CD8-positive, alpha-beta memory T cell (primary cell): ENCODE measurements at regions of chr1 and their contacts with region 1.

Region 1: DNA sequence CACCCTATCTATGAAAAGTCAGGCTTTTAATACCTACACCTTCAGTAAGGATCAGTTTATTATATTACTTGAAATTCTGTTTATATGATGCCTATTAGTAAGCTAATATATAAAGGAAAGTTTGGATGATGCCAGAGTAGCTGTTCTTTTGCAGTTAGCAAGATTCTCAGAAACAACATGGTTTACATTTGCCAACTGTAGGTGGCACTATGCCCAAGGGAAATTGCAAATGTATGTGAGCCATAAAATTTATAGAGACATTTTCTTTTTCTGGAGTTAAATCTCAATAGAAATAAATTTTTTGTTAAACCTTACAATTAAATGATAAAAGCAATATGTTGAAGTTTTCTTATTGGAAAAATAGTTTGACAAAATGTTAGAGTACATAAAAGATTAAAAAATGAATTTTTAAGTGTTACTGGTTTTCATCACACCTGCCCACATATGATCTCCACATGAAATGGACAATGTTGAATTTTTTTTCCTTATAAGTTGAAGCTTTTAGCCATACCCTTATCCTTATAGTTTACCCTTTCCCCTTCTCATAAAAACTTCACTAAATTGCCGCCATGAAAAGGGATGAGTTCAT is 32.1 kb upstream of the EPHX4 start:
- DNase-seq: peak in 4 of 5 donors; percentile 21 to 55 (median 42)
- H3K4me3 ChIP-seq: no peak overlapping the region
- H3K4me3 Mint-ChIP-seq: no peak overlapping the region
- H3K27ac ChIP-seq: no peak overlapping the region
- H3K27ac Mint-ChIP-seq: no peak overlapping the region
- H3K4me1 ChIP-seq: no peaks in the 10 kb centered on the region
- H3K4me1 Mint-ChIP-seq: no peaks in the 10 kb centered on the region
- H3K27me3 ChIP-seq: no peaks in the 10 kb centered on the region
- H3K27me3 Mint-ChIP-seq: no peaks in the 10 kb centered on the region

Region 2: DNA sequence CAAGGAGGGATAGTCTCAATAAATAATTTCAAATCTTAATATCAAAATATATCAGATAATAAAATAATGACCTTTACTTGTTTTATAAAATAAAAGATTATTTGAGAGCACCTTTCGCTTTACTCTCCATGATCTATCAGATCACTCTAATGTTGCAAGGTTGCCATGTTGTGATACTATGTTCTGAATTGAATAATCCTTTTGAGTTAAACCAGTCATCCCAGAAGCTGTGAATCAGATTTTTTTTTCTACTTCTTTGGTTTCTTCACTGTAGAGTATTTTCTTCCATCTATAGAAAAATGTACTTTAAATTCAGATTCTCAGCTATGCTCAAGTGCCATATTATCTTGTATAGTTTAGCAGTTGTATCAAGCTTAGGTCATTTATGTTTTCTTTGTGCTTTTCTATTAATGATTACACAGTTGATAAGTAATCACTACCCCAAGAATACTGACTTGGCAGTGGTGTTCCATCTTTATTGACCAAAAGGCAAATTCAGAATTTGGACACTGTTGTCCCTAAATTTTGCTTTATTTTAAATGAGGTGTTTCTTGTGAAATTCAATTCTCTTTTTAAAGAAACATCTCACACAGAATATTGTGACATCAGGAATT is 15.6 kb before region 1 on chr1:
- CTCF ChIA-PET with region 1: interaction called, 10 read pairs
- POLR2A ChIA-PET with region 1: no interaction called
- DNase-seq: no peak
- H3K4me3 ChIP-seq: no peak overlapping the region
- H3K4me3 Mint-ChIP-seq: no peak overlapping the region
- H3K27ac ChIP-seq: no peak overlapping the region
- H3K27ac Mint-ChIP-seq: no peak overlapping the region
- H3K4me1 ChIP-seq: no peaks in the 10 kb centered on the region
- H3K4me1 Mint-ChIP-seq: no peaks in the 10 kb centered on the region
- H3K27me3 ChIP-seq: no peaks in the 10 kb centered on the region
- H3K27me3 Mint-ChIP-seq: peaks cover 0 to 11% of the 10 kb centered on the region in 2 donors

Region 3: DNA sequence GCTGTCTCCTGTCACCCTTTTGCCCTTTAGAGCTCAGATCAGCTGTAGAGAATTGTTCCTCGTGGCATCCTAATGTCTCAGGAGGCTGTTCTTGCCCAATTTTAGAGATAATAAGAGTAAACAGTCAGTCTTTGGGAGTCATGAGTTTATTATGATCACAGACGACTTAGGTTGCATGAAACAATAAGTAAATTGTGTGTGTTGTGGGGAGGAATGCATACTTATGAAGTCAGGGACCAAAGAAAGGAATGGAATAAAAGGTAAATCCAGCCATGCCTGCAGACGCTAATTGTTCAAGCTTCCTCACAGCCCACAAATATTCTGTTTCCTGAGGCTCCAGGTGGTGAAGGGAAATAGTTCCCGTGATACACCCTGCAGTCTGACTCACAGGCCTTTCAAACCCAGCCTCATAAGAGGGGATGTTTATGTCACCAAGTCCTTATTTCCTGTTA is 33.0 kb after region 1 on chr1:
- CTCF ChIA-PET with region 1: no interaction called
- POLR2A ChIA-PET with region 1: no interaction called
- DNase-seq: no peak
- H3K4me3 ChIP-seq: peak overlapping the region; percentile 47
- H3K4me3 Mint-ChIP-seq: peak overlapping the region; percentile 68 to 89 (median 86)
- H3K27ac ChIP-seq: no peak overlapping the region
- H3K27ac Mint-ChIP-seq: peak overlapping the region in 4 of 8 donors; percentile 6 to 88 (median 37)
- H3K4me1 ChIP-seq: peaks cover 11% of the 10 kb centered on the region
- H3K4me1 Mint-ChIP-seq: peaks cover 14 to 16% (median 16%) of the 10 kb centered on the region in 3 donors
- H3K27me3 ChIP-seq: peaks cover 8% of the 10 kb centered on the region
- H3K27me3 Mint-ChIP-seq: peaks cover 5 to 40% of the 10 kb centered on the region in 2 donors

Region 4: DNA sequence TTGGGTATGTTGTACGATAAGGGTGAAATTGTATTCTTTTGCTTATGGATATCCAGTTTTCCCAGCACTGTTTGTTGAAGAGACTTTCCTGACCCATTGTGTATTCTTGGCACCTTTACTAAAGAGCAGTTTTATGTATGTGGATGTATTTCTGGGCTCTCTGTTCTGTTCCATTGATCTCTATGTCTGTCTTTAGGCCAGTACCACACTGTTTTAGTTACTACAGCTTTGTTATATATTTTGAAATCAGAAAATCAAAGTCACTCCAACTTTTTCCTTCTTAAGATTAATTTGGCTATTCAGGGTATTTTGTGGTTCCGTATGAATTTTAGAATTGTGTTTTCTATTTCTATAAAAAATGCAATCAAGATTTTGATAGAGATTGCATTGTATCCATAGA is 157.2 kb after region 1 on chr1:
- CTCF ChIA-PET with region 1: no interaction called
- POLR2A ChIA-PET with region 1: no interaction called
- DNase-seq: no peak
- H3K4me3 ChIP-seq: no peak overlapping the region
- H3K4me3 Mint-ChIP-seq: no peak overlapping the region
- H3K27ac ChIP-seq: no peak overlapping the region
- H3K27ac Mint-ChIP-seq: no peak overlapping the region
- H3K4me1 ChIP-seq: no peaks in the 10 kb centered on the region
- H3K4me1 Mint-ChIP-seq: no peaks in the 10 kb centered on the region
- H3K27me3 ChIP-seq: no peaks in the 10 kb centered on the region
- H3K27me3 Mint-ChIP-seq: no peaks in the 10 kb centered on the region